HepG2 (cell line): ENCODE measurements at regions of chr19 and their contacts with region 1.

Region 1: GRCh38 chr19:9847087-9847671 is 12.1 kb downstream of the PIN1 start:
- DNase-seq: peak; percentile 23
- ATAC-seq: peak; percentile 64
- H3K4me3 ChIP-seq: no peak overlapping the region
- H3K27ac ChIP-seq: no peak overlapping the region
- H3K4me1 ChIP-seq: peaks cover 1% of the 10 kb centered on the region; the same call in 1 of the 2 replicates
- H3K27me3 ChIP-seq: no peaks in the 10 kb centered on the region
- CTCF ChIP-seq: peak; percentile 58
- EP300 ChIP-seq: no peak
- POLR2A ChIP-seq: no peak
- RAD21 ChIP-seq: no peak

Region 2: DNA sequence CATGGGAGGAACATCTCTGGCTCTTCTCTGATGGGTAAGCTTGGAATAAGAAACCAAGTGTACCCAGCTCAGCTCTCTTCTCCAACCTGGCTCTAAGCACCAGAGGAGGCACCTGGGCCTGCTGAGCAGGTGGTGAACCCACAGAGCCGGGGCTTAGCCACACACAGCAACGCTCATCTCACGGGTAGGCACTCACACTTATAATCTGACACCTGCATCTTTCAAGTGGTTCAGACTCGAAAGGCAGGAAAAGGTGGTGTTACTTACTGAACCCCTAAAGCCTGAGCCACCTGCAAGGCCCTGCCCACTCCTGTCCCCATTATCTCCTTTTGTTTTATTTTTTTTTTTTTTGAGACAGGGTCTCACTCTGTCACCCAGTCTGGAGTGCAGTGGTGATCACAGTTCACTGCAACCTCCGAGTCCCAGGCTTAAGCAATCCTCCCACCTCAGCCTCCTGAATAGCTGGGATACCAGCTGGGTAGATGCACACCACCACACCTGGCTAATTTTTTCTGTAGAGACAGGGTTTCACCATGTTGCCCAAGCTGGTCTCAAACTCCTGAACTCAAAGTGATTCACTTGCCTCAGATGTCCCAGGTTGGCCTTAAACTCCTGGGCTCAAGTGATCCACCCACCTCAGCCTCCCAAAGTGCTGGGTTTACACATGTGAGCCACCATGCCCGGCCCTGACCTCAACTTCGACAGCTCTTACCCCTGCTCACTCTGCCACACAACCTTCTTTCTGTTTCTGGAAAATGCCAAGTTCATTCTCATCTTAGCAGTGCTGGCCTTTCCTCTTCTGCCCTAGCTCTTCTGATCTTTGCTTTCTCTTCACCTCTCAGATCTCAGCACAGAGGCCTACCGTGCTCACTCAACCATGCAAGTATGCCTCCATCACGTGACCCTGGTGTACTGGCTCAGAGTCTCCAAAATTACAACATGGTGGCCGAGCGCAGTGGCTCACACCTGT is 38.0 kb before region 1 on chr19:
- CTCF ChIA-PET with region 1: no interaction called
- POLR2A ChIA-PET with region 1: no interaction called
- in situ Hi-C with region 1: no loop called
- intact Hi-C with region 1: no loop called
- DNase-seq: no peak
- ATAC-seq: no peak; the same call in 2 of the 3 replicates
- H3K4me3 ChIP-seq: no peak overlapping the region
- H3K27ac ChIP-seq: no peak overlapping the region
- H3K4me1 ChIP-seq: no peaks in the 10 kb centered on the region
- H3K27me3 ChIP-seq: no peaks in the 10 kb centered on the region
- CTCF ChIP-seq: no peak
- EP300 ChIP-seq: no peak
- POLR2A ChIP-seq: no peak
- RAD21 ChIP-seq: no peak

Region 3: GRCh38 chr19:9914315-9915207 is 67.4 kb after region 1 on chr19:
- CTCF ChIA-PET with region 1: interaction called, 15 read pairs
- POLR2A ChIA-PET with region 1: no interaction called
- in situ Hi-C with region 1: loop called (anchors 5 kb)
- intact Hi-C with region 1: no loop called
- DNase-seq: peak; percentile 50
- ATAC-seq: peak; percentile 83
- H3K4me3 ChIP-seq: peak overlapping the region; percentile 46 to 73 (median 56)
- H3K27ac ChIP-seq: no peak overlapping the region
- H3K4me1 ChIP-seq: peaks cover 4% of the 10 kb centered on the region; the same call in 1 of the 2 replicates
- H3K27me3 ChIP-seq: peaks cover 0 to 13% of the 10 kb centered on the region in 2 experiments; a peak in 3 of 5 replicates
- CTCF ChIP-seq: peak; percentile 80
- EP300 ChIP-seq: no peak
- POLR2A ChIP-seq: no peak
- RAD21 ChIP-seq: peak; percentile 87